H1 (cell line): ENCODE measurements at regions of chr9 and their contacts with region 1.

Region 1: GRCh38 chr9:114155263-114155972 is at the start of gene COL27A1:
- DNase-seq: peak; percentile 49 to 98
- H3K4me3 ChIP-seq: peak within 1 kb of the TSS; percentile 49 to 86 (median 70)
- H3K27ac ChIP-seq: no peak within 1 kb of the TSS
- H3K4me1 ChIP-seq: peaks cover 0 to 14% (median 11%) of the 10 kb centered on the region in 4 experiments; a peak in 6 of 7 replicates
- H3K27me3 ChIP-seq: peaks cover 4 to 26% (median 21%) of the 10 kb centered on the region in 4 experiments
- CTCF ChIP-seq: peak in 2 of 3 experiments; percentile 82 to 87; a peak in 3 of 4 replicates
- EP300 ChIP-seq: no peak
- POLR2A ChIP-seq: no peak
- RAD21 ChIP-seq: peak; percentile 71 to 81
- total RNA-seq, gene COL27A1: 22.5 and 22.8 TPM in 2 replicates

Region 2: DNA sequence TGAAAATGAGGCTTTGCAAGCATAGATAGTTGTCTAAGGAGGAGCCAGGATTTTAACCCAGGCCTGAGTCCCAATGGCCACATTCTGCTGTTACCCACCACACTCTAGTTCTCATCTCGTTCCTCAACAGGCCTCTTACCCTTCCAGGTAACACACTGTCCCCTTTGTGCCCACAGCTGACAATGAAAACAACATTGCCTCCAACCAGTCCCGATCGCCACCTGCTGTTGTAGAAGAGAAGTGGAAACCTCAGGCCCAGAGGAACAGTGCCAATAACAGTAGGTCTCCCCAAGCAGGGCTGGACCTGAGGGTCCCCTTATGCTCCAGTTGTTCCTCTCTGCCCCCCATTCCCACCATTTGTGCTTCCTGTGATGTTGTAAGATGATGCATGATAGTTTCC is 107.7 kb before region 1 on chr9:
- CTCF ChIA-PET with region 1: no interaction called
- POLR2A ChIA-PET with region 1: no interaction called
- DNase-seq: peak in 1 of 2 experiments; percentile 50
- H3K4me3 ChIP-seq: no peak overlapping the region
- H3K27ac ChIP-seq: no peak overlapping the region
- H3K4me1 ChIP-seq: no peaks in the 10 kb centered on the region
- H3K27me3 ChIP-seq: no peaks in the 10 kb centered on the region
- CTCF ChIP-seq: peak; percentile 50 to 75 (median 67)
- EP300 ChIP-seq: no peak
- POLR2A ChIP-seq: no peak
- RAD21 ChIP-seq: peak; percentile 64 to 71

Region 3: DNA sequence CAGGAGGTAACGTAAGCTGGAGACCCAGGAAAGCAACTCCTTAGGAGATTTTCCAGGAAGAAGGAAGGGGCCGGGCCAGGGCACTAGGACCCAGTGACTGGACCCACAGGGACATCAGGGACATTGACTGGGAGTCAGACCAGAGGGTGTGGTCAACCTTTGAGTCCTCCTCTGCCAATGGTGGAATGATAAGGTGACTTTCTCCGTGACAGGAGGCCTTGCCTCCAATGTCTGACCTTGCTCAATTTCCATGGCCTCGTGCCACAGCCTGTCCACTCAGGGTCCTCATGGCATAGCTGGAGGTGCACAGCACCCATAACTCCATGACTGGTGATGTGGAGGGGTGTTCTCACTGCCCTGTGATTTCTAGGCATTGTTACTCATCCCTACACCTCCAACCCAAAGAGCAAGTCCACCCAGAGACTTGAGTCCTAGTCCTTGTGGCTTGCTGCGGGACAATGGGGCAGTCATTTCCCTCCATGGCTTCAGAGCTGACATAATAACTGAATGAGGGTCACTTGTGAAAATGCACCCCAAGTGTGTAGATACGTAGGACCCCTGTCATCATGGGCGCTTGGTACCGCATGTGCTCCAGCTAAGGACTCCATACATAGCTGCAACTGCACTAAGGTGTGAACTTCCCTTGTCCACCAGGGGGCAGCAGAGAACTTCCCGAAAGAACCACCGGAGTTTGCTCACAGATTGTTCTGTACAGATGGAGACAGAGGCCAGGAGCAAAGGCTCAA is 73.2 kb before region 1 on chr9:
- CTCF ChIA-PET with region 1: interaction called, 13 read pairs
- POLR2A ChIA-PET with region 1: no interaction called
- DNase-seq: peak in 1 of 2 experiments; percentile 97
- H3K4me3 ChIP-seq: no peak overlapping the region
- H3K27ac ChIP-seq: no peak overlapping the region
- H3K4me1 ChIP-seq: peaks cover 0 to 6% (median 3%) of the 10 kb centered on the region in 4 experiments; a peak in 4 of 7 replicates
- H3K27me3 ChIP-seq: peaks cover 0 to 3% (median under 1%) of the 10 kb centered on the region in 4 experiments; a peak in 3 of 7 replicates
- CTCF ChIP-seq: peak; percentile 83 to 96 (median 94)
- EP300 ChIP-seq: no peak
- POLR2A ChIP-seq: no peak
- RAD21 ChIP-seq: peak; percentile 94

Region 4: DNA sequence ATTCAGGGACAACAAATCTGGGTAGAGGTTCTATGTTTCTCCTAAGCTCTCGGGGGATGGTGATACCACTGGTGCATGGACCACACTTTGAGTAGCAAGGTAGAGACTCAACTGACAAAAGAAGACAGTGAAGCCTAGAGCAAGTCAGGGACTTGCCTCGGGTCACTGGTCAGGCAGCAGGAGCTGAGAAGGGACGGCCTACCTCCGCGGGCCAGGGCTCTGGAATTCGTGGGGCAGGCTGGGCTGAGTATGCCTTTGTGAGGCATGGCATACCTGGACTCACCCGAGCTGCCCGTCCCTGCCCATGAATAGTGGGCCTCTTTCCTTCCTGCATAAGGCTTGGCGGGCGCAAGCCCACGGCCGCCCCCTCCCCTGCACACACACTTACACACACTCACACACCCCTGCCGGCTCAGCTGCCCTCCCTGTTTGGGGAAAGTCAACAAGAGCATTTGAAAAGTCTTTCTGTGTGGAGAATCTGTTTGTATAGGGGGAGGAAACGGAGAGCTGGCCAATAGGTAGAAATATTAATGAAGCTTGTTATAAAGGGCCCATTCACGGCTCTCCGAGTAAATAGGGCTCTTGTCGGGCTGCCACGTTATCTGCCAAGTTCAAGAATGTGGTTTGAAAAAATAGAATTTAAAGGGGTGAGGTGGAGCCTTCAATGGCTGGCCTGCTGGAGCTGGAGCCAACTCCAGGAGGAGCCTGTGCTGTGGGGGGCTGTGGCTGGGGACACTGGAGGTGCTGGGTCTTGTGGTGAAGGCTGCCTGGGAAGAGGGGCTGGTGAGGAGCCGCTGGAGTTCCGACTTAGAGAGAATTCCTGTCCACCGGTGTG is 37.2 kb before region 1 on chr9:
- CTCF ChIA-PET with region 1: interaction called, 11 read pairs
- POLR2A ChIA-PET with region 1: no interaction called
- DNase-seq: no peak
- H3K4me3 ChIP-seq: no peak overlapping the region
- H3K27ac ChIP-seq: no peak overlapping the region
- H3K4me1 ChIP-seq: peaks cover 0 to 4% (median 1%) of the 10 kb centered on the region in 4 experiments; a peak in 3 of 7 replicates
- H3K27me3 ChIP-seq: peaks cover 0 to 2% (median 1%) of the 10 kb centered on the region in 4 experiments; a peak in 2 of 7 replicates
- CTCF ChIP-seq: no peak
- EP300 ChIP-seq: no peak
- POLR2A ChIP-seq: no peak
- RAD21 ChIP-seq: no peak

Region 5: DNA sequence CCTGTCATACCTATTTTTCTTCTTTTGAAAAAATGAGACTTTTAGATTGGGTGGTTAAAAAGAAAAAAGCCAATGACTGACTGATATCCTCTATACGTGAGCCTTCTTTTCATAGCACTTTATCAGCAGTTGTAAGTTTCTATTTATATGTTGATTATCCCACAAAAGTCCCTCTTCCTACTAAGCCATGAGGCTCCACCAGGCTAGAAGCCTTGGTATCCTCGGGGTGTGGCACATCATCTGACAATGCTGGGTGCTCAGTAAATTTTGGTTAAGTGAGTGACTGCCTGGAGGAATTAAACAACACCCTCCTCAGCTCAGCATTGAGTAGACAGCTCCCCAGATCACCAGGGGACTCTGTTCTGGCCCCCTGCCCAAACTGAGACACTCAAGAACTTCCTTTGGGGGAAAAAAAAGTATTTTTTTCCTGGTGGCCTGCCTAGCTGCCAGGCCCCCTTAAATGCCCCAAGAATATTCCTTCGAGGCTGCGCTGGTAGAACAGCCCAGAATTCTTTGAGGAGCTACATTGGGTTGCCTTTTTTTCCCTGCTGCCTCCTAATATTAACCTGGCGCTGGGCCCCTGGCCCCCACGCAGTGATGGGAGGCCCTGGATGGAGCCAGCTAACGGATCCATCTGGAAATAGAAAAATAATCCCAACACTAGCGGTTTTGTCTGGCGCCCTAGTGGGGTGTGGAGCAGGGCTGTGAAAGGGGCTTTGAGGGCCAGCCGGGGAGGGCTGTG is 23.4 kb before region 1 on chr9:
- CTCF ChIA-PET with region 1: interaction called, 12 read pairs
- POLR2A ChIA-PET with region 1: interaction called, 3 read pairs
- DNase-seq: no peak
- H3K4me3 ChIP-seq: no peak overlapping the region
- H3K27ac ChIP-seq: no peak overlapping the region
- H3K4me1 ChIP-seq: peaks cover 0 to 2% (median 0%) of the 10 kb centered on the region in 4 experiments; a peak in 2 of 7 replicates
- H3K27me3 ChIP-seq: no peaks in the 10 kb centered on the region; a peak in 1 of 7 replicates
- CTCF ChIP-seq: no peak
- EP300 ChIP-seq: no peak
- POLR2A ChIP-seq: no peak
- RAD21 ChIP-seq: no peak

Region 6: GRCh38 chr9:114169029-114169951 is 13.9 kb after region 1 on chr9:
- CTCF ChIA-PET with region 1: interaction called, 23 read pairs
- POLR2A ChIA-PET with region 1: interaction called, 3 read pairs
- DNase-seq: no peak
- H3K4me3 ChIP-seq: no peak overlapping the region
- H3K27ac ChIP-seq: no peak overlapping the region
- H3K4me1 ChIP-seq: no peaks in the 10 kb centered on the region; a peak in 1 of 7 replicates
- H3K27me3 ChIP-seq: no peaks in the 10 kb centered on the region
- CTCF ChIP-seq: no peak
- EP300 ChIP-seq: no peak
- POLR2A ChIP-seq: no peak
- RAD21 ChIP-seq: no peak

Region 7: GRCh38 chr9:114271641-114272081 is 116.2 kb after region 1 on chr9:
- CTCF ChIA-PET with region 1: interaction called, 25 read pairs
- POLR2A ChIA-PET with region 1: no interaction called
- DNase-seq: peak in 1 of 2 experiments; percentile 80
- H3K4me3 ChIP-seq: no peak overlapping the region
- H3K27ac ChIP-seq: no peak overlapping the region
- H3K4me1 ChIP-seq: no peaks in the 10 kb centered on the region
- H3K27me3 ChIP-seq: no peaks in the 10 kb centered on the region
- CTCF ChIP-seq: peak; percentile 66 to 69 (median 66)
- EP300 ChIP-seq: no peak
- POLR2A ChIP-seq: no peak
- RAD21 ChIP-seq: peak; percentile 70 to 77